Heart left ventricle (tissue), 16 donors: ENCODE measurements at regions of chr17 and their contacts with region 1.

Region 1: DNA sequence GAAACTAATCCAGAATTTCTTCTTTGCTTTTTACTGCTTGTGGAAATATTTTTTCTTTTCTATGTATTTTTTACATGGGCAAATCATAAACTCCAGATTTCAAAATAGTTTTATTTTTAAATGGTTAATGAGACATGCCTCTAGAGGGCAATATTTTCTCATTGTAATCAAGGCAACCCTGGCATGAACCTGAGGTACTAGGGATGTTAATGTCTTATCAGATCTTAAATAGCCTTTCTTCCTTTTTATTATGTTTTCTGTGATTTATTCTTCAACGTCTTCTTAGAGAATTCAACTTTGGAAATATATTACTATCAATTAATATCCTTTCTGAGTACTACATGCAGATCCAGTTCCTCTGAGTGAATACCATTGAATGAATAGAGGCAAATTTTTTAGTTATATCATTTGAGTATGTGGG is 324.7 kb downstream of the BCAS3 start:
- DNase-seq: no peak
- ATAC-seq: peak in 1 of 4 donors; percentile 56
- H3K4me3 ChIP-seq: no peak overlapping the region
- H3K27ac ChIP-seq: peak overlapping the region in 3 of 12 donors; percentile 18 to 20 (median 20)
- H3K4me1 ChIP-seq: peaks cover 0 to 9% (median 0%) of the 10 kb centered on the region in 12 donors
- H3K27me3 ChIP-seq: no peaks in the 10 kb centered on the region
- CTCF ChIP-seq: peak; percentile 19 to 71 (median 57)
- POLR2A ChIP-seq: no peak

Region 2: DNA sequence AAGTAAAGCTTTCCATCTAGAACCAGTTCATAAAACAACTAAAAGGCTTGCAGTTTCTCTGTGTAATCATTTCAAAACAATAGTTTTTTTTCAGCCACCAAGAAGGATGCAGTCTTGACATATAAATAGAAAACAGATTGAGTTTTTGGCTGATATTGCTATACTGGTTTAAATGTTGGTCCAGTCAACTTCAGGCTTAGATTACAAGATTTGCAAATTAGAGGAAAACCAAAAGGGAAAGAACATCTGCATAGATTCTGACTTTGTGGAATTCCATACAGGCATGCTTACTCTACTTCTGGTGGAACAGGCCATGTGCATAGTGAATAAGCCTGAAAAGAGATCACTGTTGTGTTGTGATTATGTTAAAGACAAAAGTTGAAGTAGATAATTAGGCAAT is 174.4 kb before region 1 on chr17:
- intact Hi-C with region 1: no loop called
- DNase-seq: no peak
- ATAC-seq: no peak
- H3K4me3 ChIP-seq: no peak overlapping the region
- H3K27ac ChIP-seq: no peak overlapping the region
- H3K4me1 ChIP-seq: peaks cover 0 to 10% (median 4%) of the 10 kb centered on the region in 12 donors
- H3K27me3 ChIP-seq: no peaks in the 10 kb centered on the region
- CTCF ChIP-seq: no peak
- POLR2A ChIP-seq: no peak

Region 3: DNA sequence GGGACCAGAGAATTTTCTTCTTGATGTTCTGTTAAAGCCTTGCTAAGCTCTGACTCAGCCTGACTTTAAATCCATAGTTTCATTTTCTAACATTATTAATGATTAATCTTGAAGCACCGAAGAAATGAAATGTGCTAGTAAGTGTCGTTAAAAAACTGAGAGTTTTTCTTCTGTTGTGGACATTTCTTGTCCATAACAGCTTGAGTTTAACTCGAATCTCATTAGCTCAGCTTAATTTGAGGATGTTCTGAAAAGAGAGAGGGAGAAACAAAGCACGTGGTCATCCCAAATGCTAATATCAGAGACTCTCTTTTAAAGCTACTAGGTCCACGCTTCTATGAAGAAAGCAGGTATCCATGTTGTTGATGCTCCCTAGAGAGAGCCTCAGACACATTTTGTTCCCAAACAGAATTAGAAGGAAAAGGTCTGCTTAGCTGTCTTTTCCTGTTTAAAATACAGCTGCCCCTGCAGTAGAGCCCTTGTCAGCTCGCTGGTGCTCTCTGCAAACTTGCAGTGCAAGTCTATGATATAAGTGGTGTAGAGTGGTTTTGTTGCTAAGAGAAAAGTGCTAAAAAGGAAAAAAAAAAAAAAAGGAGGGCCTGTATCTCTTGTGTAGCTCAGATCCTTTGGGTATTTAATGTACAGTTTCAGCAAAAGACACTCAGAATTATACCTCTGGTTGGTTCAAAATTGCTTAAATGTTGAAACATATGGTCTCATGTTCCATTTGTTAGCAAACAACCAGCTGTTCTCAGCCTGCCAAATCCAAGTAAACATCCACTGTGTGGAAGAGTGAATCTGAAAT is 206.2 kb after region 1 on chr17:
- intact Hi-C with region 1: loop called in 3 of 10 experiments (anchors 5 to 10 kb)
- DNase-seq: peak in 1 of 5 donors; percentile 31
- ATAC-seq: peak in 3 of 4 donors; percentile 52 to 70 (median 66)
- H3K4me3 ChIP-seq: peak overlapping the region in 6 of 12 donors; percentile 0 to 16 (median 5)
- H3K27ac ChIP-seq: peak overlapping the region; percentile 45 to 76 (median 65)
- H3K4me1 ChIP-seq: peaks cover 0 to 43% (median 11%) of the 10 kb centered on the region in 12 donors
- H3K27me3 ChIP-seq: no peaks in the 10 kb centered on the region
- CTCF ChIP-seq: no peak
- POLR2A ChIP-seq: no peak

Region 4: DNA sequence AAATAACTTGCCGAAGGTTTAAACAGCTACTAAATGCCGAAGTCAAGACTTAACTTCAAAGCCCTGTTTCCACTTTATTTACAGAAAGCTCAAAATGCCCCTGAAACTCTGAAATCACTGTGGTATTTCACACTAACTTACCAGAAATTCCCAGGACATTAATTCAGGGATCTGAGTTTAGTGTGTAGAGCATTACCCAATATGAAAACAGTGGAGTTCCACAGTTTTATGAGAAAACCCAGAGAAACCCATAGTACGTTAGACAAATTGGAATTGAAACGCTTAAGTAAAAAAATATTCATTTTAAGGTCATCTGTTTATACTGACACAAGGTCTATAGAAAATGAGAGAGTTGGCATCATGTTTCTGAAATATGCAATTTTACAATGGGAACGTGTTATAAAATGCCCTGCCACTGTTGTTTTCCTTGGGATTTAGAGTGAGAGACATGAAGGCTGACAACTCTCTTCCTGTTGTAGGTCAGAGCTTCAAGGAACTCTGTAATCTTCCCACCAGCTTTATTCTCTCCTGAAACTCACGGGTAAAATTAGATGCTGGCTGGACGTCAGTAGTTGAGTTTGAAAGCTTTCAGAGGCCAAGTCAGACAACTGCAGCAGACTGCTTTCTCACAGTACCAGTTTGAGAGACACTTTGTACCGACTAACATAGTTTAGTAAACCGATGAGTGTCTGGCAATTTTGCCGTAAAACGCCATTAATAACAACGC is 257.9 kb after region 1 on chr17:
- intact Hi-C with region 1: loop called in 2 of 10 experiments (anchors 10 kb)
- DNase-seq: peak in 4 of 5 donors; percentile 31 to 46 (median 35)
- ATAC-seq: peak; percentile 89 to 95 (median 94)
- H3K4me3 ChIP-seq: no peak overlapping the region
- H3K27ac ChIP-seq: peak overlapping the region; percentile 30 to 83 (median 62)
- H3K4me1 ChIP-seq: peaks cover 0 to 30% (median 16%) of the 10 kb centered on the region in 12 donors
- H3K27me3 ChIP-seq: no peaks in the 10 kb centered on the region
- CTCF ChIP-seq: no peak
- POLR2A ChIP-seq: no peak

Region 5: GRCh38 chr17:61338000-61338798 is 335.9 kb after region 1 on chr17:
- intact Hi-C with region 1: loop called in 1 of 10 experiments (anchors 10 kb)
- DNase-seq: peak in 2 of 5 donors; percentile 53 to 67
- ATAC-seq: peak in 2 of 4 donors; percentile 41 to 80
- H3K4me3 ChIP-seq: no peak overlapping the region
- H3K27ac ChIP-seq: peak overlapping the region in 11 of 12 donors; percentile 4 to 60 (median 35)
- H3K4me1 ChIP-seq: peaks cover 0 to 40% (median 31%) of the 10 kb centered on the region in 12 donors
- H3K27me3 ChIP-seq: no peaks in the 10 kb centered on the region
- CTCF ChIP-seq: no peak
- POLR2A ChIP-seq: no peak

Region 6: GRCh38 chr17:61399131-61400057 is 397.1 kb after region 1 on chr17 and contains the start of gene TBX2:
- intact Hi-C with region 1: loop called in 7 of 10 experiments (anchors 5 kb)
- DNase-seq: peak; percentile 84 to 90 (median 87)
- ATAC-seq: peak; percentile 47 to 75 (median 60)
- H3K4me3 ChIP-seq: peak within 1 kb of the TSS; percentile 51 to 84 (median 65)
- H3K27ac ChIP-seq: peak within 1 kb of the TSS; percentile 47 to 88 (median 78)
- H3K4me1 ChIP-seq: peaks cover 0 to 71% (median 34%) of the 10 kb centered on the region in 12 donors
- H3K27me3 ChIP-seq: peaks cover 37 to 90% (median 80%) of the 10 kb centered on the region in 9 donors
- CTCF ChIP-seq: peak in 1 of 12 donors; percentile 17
- POLR2A ChIP-seq: peak in 1 of 2 donors; percentile 50
- total RNA-seq, gene TBX2: 7.0 to 23.0 (median 13.6) TPM

Region 7: GRCh38 chr17:61593426-61593825 is 591.1 kb after region 1 on chr17:
- intact Hi-C with region 1: no loop called
- DNase-seq: no peak
- ATAC-seq: no peak
- H3K4me3 ChIP-seq: no peak overlapping the region
- H3K27ac ChIP-seq: no peak overlapping the region
- H3K4me1 ChIP-seq: no peaks in the 10 kb centered on the region
- H3K27me3 ChIP-seq: peaks cover 0 to 59% (median 2%) of the 10 kb centered on the region in 9 donors
- CTCF ChIP-seq: no peak
- POLR2A ChIP-seq: no peak